ENCODE measurements at regions of chr2 and their contacts with region 1.

Region 1: GRCh38 chr2:152175458-152176325 is at the start of gene STAM2:
- DNase-seq: peak; percentile 96
- ATAC-seq: peak; percentile 88
- H3K4me3 Mint-ChIP-seq: peak within 1 kb of the TSS; percentile 95
- H3K27ac Mint-ChIP-seq: peak within 1 kb of the TSS; percentile 99
- H3K4me1 Mint-ChIP-seq: peaks cover 26% of the 10 kb centered on the region
- H3K27me3 Mint-ChIP-seq: no peaks in the 10 kb centered on the region
- total RNA-seq, gene STAM2: 14.9 to 18.5 TPM

Region 2: GRCh38 chr2:151828143-151828889 is 347.4 kb before region 1 on chr2 and contains the start of gene ARL5A:
- CTCF ChIA-PET with region 1: no interaction called
- POLR2A ChIA-PET with region 1: no interaction called
- intact Hi-C with region 1: loop called (anchors 1 to 5 kb)
- DNase-seq: peak; percentile 97
- ATAC-seq: peak; percentile 97
- H3K4me3 Mint-ChIP-seq: peak within 1 kb of the TSS; percentile 97
- H3K27ac Mint-ChIP-seq: peak within 1 kb of the TSS; percentile 94
- H3K4me1 Mint-ChIP-seq: peaks cover 48% of the 10 kb centered on the region
- H3K27me3 Mint-ChIP-seq: no peaks in the 10 kb centered on the region
- total RNA-seq, gene ARL5A: 60.8 to 64.9 TPM

Region 3: GRCh38 chr2:152189622-152190495 is 14.2 kb after region 1 on chr2:
- CTCF ChIA-PET with region 1: interaction called, 14 read pairs
- POLR2A ChIA-PET with region 1: no interaction called
- intact Hi-C with region 1: no loop called
- DNase-seq: peak; percentile 44
- ATAC-seq: peak; percentile 74
- H3K4me3 Mint-ChIP-seq: no peak overlapping the region
- H3K27ac Mint-ChIP-seq: no peak overlapping the region
- H3K4me1 Mint-ChIP-seq: peaks cover 7% of the 10 kb centered on the region
- H3K27me3 Mint-ChIP-seq: peaks cover 23% of the 10 kb centered on the region

Region 4: GRCh38 chr2:152421521-152422370 is 246.1 kb after region 1 on chr2:
- CTCF ChIA-PET with region 1: no interaction called
- POLR2A ChIA-PET with region 1: no interaction called
- intact Hi-C with region 1: loop called (anchors 5 kb)
- DNase-seq: peak; percentile 27
- ATAC-seq: peak; percentile 82
- H3K4me3 Mint-ChIP-seq: no peak overlapping the region
- H3K27ac Mint-ChIP-seq: no peak overlapping the region
- H3K4me1 Mint-ChIP-seq: peaks cover 12% of the 10 kb centered on the region
- H3K27me3 Mint-ChIP-seq: peaks cover 13% of the 10 kb centered on the region

Region 5: GRCh38 chr2:152627351-152627957 is 451.8 kb after region 1 on chr2:
- CTCF ChIA-PET with region 1: interaction called, 4 read pairs
- POLR2A ChIA-PET with region 1: no interaction called
- intact Hi-C with region 1: loop called in 1 of 2 experiments (anchors 2 kb)
- DNase-seq: no peak
- ATAC-seq: no peak
- H3K4me3 Mint-ChIP-seq: no peak overlapping the region
- H3K27ac Mint-ChIP-seq: no peak overlapping the region
- H3K4me1 Mint-ChIP-seq: peaks cover 8% of the 10 kb centered on the region
- H3K27me3 Mint-ChIP-seq: peaks cover 5% of the 10 kb centered on the region

Region 6: DNA sequence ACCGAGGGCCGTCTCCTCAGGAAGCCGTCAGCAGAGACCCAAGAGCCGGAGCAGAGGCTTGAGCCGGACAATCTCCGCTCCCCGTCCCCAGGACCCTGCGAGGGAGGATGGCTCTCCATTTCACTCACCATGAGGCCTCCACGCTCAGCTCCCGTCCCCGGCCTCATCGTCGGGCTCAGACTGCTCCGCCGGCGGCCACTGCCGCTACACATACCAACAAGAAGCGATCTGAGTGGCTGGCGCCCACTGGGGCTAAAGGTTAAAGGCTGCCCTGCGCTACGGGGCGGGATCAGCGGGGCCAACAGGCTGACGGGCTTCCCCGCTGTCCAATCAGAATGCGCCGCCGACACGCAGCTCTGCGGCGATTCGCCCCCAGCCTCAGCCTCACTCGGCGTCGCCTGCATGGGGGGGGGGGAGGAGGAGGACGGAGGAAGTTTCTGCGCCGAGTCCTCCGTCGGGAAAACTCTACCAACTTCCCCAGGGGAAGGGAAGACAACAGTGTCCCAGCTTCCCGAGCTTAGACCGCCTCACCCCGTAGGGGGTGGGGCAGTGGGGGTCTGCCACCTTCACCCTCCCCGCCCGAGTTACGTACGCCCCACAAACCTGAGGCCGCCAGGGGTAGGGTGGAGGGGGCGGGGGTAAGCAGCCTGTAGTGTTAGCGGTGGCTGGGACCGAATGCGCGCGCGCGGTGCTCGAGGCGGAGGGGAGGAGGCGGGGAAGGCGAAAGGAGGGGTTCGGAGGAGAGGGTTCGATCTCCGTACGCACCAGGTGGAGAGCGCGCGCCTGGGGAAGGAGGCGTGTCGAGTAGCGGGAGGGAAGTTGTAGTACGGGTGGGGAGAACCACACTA is 541.8 kb after region 1 on chr2 and contains the start of gene PRPF40A:
- CTCF ChIA-PET with region 1: interaction called, 4 read pairs
- POLR2A ChIA-PET with region 1: no interaction called
- intact Hi-C with region 1: loop called (anchors 1 kb)
- DNase-seq: peak; percentile 99
- ATAC-seq: peak; percentile 82
- H3K4me3 Mint-ChIP-seq: peak within 1 kb of the TSS; percentile 99
- H3K27ac Mint-ChIP-seq: peak within 1 kb of the TSS; percentile 99
- H3K4me1 Mint-ChIP-seq: peaks cover 61% of the 10 kb centered on the region
- H3K27me3 Mint-ChIP-seq: no peaks in the 10 kb centered on the region
- total RNA-seq, gene PRPF40A: 145 to 152 TPM

Measured in activated CD4-positive, alpha-beta T cell treated with anti-CD3 and anti-CD28 coated beads for 36 hours (primary cell).